AG04450 (cell line): ENCODE measurements at regions of chr4 and their contacts with region 1.

Region 1: DNA sequence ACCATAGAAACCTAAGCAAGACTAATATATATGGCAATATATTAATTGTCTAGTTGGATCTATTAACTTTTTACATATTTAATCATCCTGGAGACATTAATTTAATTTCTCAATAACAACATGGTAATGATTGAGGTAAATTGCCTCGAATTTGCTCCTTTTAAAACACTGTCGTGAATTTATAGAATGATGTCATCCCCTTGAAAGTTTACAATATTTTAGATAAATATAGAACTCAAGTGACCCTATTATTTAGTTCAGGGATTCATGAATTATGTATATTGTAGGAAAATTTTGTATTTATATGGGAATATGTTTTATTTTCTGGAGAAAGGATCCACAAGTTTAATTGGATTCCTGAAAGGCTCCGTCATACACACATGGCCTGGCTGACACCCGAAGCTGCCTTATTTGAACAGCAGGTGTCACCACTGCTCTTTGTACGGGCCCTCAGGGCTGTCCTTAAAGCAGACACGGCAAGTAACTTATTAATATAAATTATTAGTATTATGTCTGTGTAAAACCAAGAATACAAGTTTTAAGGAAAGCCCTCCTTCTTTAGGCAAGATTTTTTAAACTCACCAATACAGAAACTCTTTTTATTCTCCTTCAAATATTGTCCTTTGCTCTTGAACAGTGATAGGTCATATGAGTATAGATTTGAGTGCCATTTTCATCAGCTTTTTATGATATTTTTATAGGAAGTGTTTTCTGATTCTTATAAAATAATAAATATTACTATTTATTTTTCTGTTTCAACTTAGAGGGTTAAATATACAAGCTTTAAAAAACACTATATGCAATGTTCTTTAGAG is 1.9 kb upstream of the PLRG1 start:
- DNase-seq: peak; percentile 65
- H3K4me3 ChIP-seq: no peak overlapping the region
- H3K27ac ChIP-seq: no peak overlapping the region
- H3K27me3 ChIP-seq: no peaks in the 10 kb centered on the region
- CTCF ChIP-seq: peak; percentile 77

Region 2: DNA sequence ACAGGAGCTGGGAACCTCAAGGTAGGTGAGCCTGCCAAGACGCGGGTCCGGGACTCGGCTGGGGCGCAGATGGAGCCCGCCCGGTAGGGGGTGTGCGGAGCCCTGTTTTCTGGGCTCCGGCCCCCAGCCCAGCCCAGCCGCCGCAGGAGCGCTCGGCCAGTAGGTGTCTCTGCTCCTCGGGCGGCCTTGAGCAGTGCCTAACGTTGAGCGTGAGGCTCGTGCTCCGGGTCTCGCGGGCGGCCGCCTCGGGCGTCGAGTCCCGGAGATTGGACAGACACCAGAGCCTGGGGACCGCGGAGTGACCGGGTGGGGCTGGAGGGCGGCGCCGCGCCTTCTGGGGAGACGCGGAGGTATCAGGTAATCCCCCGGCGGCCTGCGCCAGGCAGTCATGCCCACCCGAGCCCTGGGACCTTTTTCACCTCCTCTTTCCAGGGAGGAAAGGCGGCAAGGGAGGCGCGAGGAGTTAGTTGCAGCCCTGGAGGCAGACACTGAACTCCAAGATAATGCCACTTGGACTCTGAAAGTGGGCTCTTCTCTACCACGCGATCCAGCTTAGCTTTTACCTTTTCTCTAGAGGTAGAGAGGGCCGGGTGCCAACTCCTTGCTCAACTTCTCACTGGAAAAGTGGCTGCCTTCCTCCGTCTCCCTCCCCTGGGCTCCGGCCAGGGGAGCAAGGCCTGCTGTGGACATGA is 74.9 kb after region 1 on chr4:
- CTCF ChIA-PET with region 1: interaction called, 183 read pairs
- POLR2A ChIA-PET with region 1: no interaction called
- DNase-seq: no peak
- H3K4me3 ChIP-seq: no peak overlapping the region
- H3K27ac ChIP-seq: no peak overlapping the region
- H3K27me3 ChIP-seq: peaks cover 16% of the 10 kb centered on the region
- CTCF ChIP-seq: peak; percentile 50

Region 3: DNA sequence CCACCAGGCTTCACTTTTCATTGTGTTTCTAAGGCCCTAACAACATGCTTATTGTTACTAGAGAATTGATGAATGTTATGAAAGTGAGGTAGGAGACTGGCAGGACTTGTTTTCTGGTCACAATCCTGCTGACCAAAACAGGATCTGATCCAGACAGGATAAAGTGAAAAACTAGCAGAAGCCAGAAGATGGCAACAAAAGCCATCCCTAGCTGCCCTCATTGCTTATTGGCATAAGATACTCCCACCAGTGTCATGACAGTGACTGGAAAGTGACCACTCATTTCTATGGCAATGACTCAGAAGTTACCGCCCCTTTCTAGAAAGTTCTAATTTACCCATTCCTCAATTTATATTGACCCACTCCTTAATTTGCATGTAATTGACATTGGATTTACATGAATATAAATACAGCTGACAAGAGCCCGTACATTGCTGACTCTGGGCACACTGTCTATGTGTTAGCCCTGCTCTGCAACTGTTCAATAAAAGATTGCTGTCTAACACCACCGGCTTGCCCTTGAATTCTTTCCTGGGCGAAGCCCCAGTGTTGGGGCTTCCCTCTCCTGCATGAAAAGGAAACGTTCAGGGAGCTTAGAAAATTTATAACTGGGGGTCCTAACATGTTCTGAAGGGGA is 90.4 kb after region 1 on chr4:
- CTCF ChIA-PET with region 1: interaction called, 10 read pairs
- POLR2A ChIA-PET with region 1: no interaction called
- DNase-seq: no peak
- H3K4me3 ChIP-seq: no peak overlapping the region
- H3K27ac ChIP-seq: no peak overlapping the region
- H3K27me3 ChIP-seq: no peaks in the 10 kb centered on the region
- CTCF ChIP-seq: no peak

Region 4: DNA sequence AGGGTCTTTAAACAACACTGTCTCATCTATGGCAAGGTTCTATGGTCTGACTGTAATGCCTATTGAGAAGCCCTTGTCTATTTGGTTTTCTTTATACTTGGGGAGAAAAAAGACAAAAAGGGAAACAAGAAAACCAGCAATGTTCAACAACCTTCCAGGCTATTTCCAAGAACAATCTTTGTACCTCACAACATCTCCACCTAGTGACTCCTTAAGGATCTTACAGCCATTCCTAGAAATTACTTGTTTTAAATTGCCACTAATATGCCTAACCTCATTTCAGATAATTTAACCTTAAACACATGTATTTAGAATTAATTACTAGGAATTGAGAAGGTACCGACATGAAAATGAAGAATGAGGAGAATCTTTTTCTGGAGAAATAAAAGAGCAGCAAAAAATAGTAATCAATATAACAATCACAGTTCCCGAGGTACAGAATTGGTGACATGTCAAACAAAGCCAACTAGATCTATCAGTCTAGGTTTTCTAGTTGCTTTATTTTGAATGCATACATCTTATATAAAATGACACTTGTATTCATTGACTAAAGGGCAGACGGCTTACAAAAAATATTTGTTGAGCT is 227.4 kb after region 1 on chr4:
- CTCF ChIA-PET with region 1: interaction called, 34 read pairs
- POLR2A ChIA-PET with region 1: no interaction called
- DNase-seq: peak; percentile 4
- H3K4me3 ChIP-seq: no peak overlapping the region
- H3K27ac ChIP-seq: no peak overlapping the region
- H3K27me3 ChIP-seq: no peaks in the 10 kb centered on the region
- CTCF ChIP-seq: peak; percentile 66